T-cell (primary cell): ENCODE measurements at regions of chr17 and their contacts with region 1.

Region 1: GRCh38 chr17:1920948-1921351 is 91.1 kb downstream of the RPA1 start:
- DNase-seq: no peak
- ATAC-seq: no peak
- H3K4me3 ChIP-seq: no peak overlapping the region
- H3K4me3 Mint-ChIP-seq: no peak overlapping the region
- H3K27ac ChIP-seq: no peak overlapping the region
- H3K27ac Mint-ChIP-seq: no peak overlapping the region
- H3K4me1 ChIP-seq: no peaks in the 10 kb centered on the region
- H3K4me1 Mint-ChIP-seq: no peaks in the 10 kb centered on the region
- H3K27me3 ChIP-seq: peaks cover 0 to 10% of the 10 kb centered on the region in 2 experiments
- H3K27me3 Mint-ChIP-seq: peaks cover 0 to 2% of the 10 kb centered on the region in 2 donors

Region 2: GRCh38 chr17:1197781-1198490 is 723.0 kb before region 1 on chr17:
- CTCF ChIA-PET with region 1: no interaction called
- POLR2A ChIA-PET with region 1: interaction called in 1 of 2 experiments, 17 read pairs
- DNase-seq: peak; percentile 45 to 83 (median 65)
- ATAC-seq: peak; percentile 70 to 80 (median 77)
- H3K4me3 ChIP-seq: peak overlapping the region; percentile 6 to 15
- H3K4me3 Mint-ChIP-seq: peak overlapping the region in 2 of 3 donors; percentile 21 to 54
- H3K27ac ChIP-seq: peak overlapping the region; percentile 44
- H3K27ac Mint-ChIP-seq: peak overlapping the region; percentile 78 to 83
- H3K4me1 ChIP-seq: peaks cover 25 to 65% of the 10 kb centered on the region in 2 experiments
- H3K4me1 Mint-ChIP-seq: peaks cover 43 to 60% (median 55%) of the 10 kb centered on the region in 3 donors
- H3K27me3 ChIP-seq: peaks cover 0 to 3% of the 10 kb centered on the region in 2 experiments
- H3K27me3 Mint-ChIP-seq: no peaks in the 10 kb centered on the region

Region 3: DNA sequence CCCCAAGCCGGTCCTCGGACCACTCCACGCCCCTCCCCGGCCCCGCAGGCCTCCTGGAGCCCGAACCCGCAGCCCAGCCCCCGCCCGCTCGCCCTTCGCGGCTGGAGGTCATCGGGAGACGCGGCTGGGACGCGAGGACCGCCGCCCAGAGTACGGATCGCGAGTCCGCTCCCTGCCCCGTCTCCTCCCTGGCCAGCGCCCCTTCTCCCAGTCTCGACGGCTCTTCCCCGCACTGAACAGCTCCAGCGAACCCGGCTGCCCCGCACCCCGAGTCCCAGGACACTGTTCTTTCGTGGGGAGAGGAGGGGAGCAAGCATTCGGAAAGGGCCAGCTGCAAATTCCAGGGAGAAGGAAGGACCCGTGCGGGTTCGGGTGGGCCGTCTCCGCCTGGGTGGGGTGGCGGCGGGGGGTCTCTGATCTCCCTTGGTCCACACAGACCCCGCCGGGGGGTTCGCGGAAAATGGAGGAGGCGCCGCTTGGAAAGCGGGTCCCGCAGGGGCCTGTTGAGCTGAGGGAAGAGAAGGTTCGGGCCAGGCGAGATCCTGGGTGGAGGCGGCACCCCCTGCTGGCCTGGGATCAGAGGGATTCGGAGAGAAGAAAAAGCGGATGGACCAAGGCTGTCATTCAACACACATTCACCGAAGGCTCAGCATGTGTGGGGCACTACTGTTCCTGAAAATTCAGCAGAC is 104.8 kb after region 1 on chr17:
- CTCF ChIA-PET with region 1: no interaction called
- POLR2A ChIA-PET with region 1: no interaction called
- DNase-seq: peak in 3 of 35 experiments; percentile 13 to 49 (median 29)
- ATAC-seq: no peak
- H3K4me3 ChIP-seq: peak overlapping the region; percentile 46 to 54
- H3K4me3 Mint-ChIP-seq: peak overlapping the region; percentile 78 to 81 (median 80)
- H3K27ac ChIP-seq: no peak overlapping the region
- H3K27ac Mint-ChIP-seq: no peak overlapping the region
- H3K4me1 ChIP-seq: peaks cover 12 to 50% of the 10 kb centered on the region in 2 experiments
- H3K4me1 Mint-ChIP-seq: peaks cover 22 to 34% (median 27%) of the 10 kb centered on the region in 3 donors
- H3K27me3 ChIP-seq: peaks cover 2 to 78% of the 10 kb centered on the region in 2 experiments
- H3K27me3 Mint-ChIP-seq: peaks cover 9 to 25% of the 10 kb centered on the region in 2 donors

Region 4: DNA sequence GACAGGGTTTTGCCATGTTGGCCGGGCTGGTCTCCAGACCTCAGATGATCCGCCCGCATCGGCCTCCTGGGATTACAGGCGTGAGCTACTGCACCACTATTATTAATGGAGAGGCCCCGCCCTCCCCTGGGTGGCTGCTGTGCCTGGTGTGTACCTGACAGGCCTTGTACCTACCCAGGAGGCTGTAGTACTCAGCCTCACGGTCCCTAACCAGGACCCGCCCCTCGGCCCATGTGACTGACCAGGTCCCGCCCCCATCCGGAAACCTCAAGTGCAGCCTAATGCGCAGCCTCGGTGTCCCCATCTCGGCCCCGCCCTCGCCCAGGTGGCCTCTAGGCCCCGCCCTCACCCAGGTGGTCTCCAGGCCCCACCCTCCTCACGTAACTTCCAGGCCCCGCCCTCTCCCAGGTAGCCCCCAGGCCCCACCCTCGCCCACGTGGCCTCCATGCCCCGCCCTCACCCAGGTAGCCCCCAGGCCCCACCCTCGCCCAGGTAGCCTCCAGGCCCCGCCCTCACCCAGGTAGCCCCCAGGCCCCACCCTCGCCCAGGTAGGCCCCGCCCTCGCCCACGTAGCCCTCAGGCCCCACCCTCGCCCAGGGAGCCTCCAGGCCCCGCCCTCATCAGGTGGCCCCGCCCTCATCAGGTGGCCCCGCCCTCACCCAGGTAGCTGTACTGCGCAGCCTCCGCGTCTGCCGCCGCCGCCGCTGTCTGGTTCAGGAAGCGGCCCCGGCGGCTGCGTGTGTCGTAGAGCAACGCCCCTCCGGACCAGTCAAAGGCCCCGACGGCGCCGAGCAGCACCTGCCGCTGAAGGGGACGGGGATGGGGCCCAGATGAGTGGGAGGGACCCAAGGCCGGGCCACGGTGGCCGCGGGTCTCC is 1833.7 kb after region 1 on chr17:
- CTCF ChIA-PET with region 1: no interaction called
- POLR2A ChIA-PET with region 1: no interaction called
- DNase-seq: peak; percentile 50 to 91 (median 80)
- ATAC-seq: peak; percentile 82 to 88 (median 86)
- H3K4me3 ChIP-seq: peak overlapping the region; percentile 11 to 28
- H3K4me3 Mint-ChIP-seq: peak overlapping the region in 1 of 3 donors; percentile 46
- H3K27ac ChIP-seq: peak overlapping the region; percentile 62
- H3K27ac Mint-ChIP-seq: peak overlapping the region in 1 of 2 donors; percentile 55
- H3K4me1 ChIP-seq: peaks cover 15 to 45% of the 10 kb centered on the region in 2 experiments
- H3K4me1 Mint-ChIP-seq: peaks cover 22 to 38% (median 33%) of the 10 kb centered on the region in 3 donors
- H3K27me3 ChIP-seq: no peaks in the 10 kb centered on the region
- H3K27me3 Mint-ChIP-seq: no peaks in the 10 kb centered on the region